Activated CD4-positive, alpha-beta T cell treated with anti-CD3 and anti-CD28 coated beads for 36 hours (primary cell): ENCODE measurements at regions of chr19 and their contacts with region 1.

Region 1: GRCh38 chr19:16371540-16371986 is 46.9 kb downstream of the KLF2 start:
- DNase-seq: peak; percentile 92
- ATAC-seq: peak; percentile 82
- H3K4me3 Mint-ChIP-seq: peak overlapping the region; percentile 22
- H3K27ac Mint-ChIP-seq: peak overlapping the region; percentile 76
- H3K4me1 Mint-ChIP-seq: peaks cover 46% of the 10 kb centered on the region
- H3K27me3 Mint-ChIP-seq: peaks cover 14% of the 10 kb centered on the region

Region 2: GRCh38 chr19:16330368-16330801 is 41.2 kb before region 1 on chr19:
- CTCF ChIA-PET with region 1: interaction called, 10 read pairs
- POLR2A ChIA-PET with region 1: interaction called, 5 read pairs
- intact Hi-C with region 1: loop called (anchors 1 kb)
- DNase-seq: peak; percentile 98
- ATAC-seq: peak; percentile 90
- H3K4me3 Mint-ChIP-seq: peak overlapping the region; percentile 33
- H3K27ac Mint-ChIP-seq: peak overlapping the region; percentile 17
- H3K4me1 Mint-ChIP-seq: peaks cover 62% of the 10 kb centered on the region
- H3K27me3 Mint-ChIP-seq: peaks cover 28% of the 10 kb centered on the region

Region 3: DNA sequence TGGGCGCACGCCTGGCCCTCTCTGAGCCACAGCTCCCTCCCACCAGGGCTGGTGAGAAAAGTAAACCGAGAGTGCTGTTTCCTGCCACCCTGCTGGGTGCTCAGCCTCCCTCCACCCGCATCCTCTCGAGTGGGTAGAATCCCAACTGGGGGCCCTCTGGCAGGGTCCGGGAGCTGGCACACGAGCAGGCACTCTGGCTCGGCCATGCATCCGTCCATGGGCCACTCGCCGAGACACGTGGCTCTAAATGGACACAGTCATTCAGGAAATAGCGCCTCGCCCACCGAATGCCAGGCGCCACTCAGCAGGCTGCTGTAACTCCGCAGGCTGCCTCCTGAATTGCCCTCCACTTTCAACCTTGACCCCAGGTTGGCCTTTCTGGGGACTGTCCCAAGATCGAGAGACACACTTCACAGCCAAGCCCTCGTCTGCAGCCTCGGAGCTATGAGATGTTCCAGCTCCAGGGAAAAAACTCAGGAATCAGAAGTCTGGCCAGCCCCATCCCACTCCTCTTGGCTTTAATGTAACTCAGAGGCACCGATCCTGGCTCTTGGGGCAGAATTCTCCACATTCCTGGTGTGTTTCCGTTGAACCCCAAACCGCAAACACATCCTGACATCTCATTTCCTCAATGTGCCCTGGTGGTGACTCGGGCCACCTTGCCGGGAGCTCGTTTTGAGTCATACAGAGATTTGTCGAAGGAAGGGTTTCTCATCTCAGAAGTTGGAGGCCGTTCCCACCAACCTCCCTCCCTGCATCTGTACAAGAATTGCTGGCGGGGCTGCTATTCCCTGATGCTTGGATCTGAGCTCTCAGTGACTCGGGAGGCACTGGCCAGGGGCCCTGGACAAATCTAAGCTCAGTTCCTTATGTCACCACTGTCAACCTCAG is 32.8 kb before region 1 on chr19:
- CTCF ChIA-PET with region 1: interaction called, 16 read pairs
- POLR2A ChIA-PET with region 1: interaction called, 4 read pairs
- intact Hi-C with region 1: loop called (anchors 1 kb)
- DNase-seq: peak; percentile 85
- ATAC-seq: peak; percentile 70
- H3K4me3 Mint-ChIP-seq: peak overlapping the region; percentile 49
- H3K27ac Mint-ChIP-seq: peak overlapping the region; percentile 55
- H3K4me1 Mint-ChIP-seq: peaks cover 54% of the 10 kb centered on the region
- H3K27me3 Mint-ChIP-seq: peaks cover 10% of the 10 kb centered on the region